ENCODE measurements at regions of chr22 and their contacts with region 1.

Region 1: GRCh38 chr22:24580276-24580675 is 12.6 kb downstream of the LRRC75B start:
- DNase-seq: no peak
- ATAC-seq: no peak
- H3K4me3 ChIP-seq: no peak overlapping the region
- H3K27ac ChIP-seq: no peak overlapping the region
- H3K4me1 ChIP-seq: no peaks in the 10 kb centered on the region
- H3K27me3 ChIP-seq: no peaks in the 10 kb centered on the region
- CTCF ChIP-seq: no peak
- EP300 ChIP-seq: no peak
- POLR2A ChIP-seq: no peak
- RAD21 ChIP-seq: no peak

Region 2: DNA sequence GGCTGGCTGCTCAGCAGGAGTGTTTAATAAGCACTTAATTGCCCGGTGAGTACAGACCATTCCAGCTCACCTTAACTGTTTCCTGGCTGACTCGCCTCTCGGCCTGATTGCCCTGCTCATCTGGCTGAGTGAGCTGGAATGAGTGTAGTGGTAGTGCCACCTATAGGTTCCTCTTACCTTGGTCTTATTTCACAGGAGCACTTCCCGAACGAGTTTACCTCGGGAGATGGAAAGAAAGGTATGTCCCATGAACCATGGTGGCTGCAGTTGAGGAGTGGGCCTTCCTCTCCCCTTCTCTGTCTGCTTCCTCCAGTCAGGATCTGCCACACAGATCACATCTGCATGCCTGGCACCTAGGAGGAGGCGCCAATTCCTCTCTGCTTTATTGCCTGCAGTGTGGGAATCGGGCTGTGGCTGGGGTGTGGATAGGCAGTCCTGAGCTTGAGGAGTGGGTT is 58.5 kb before region 1 on chr22:
- CTCF ChIA-PET with region 1: no interaction called
- POLR2A ChIA-PET with region 1: no interaction called
- RAD21 ChIA-PET with region 1: no interaction called
- SMC1A ChIA-PET with region 1: no interaction called
- in situ Hi-C with region 1: no loop called
- intact Hi-C with region 1: no loop called
- DNase-seq: no peak
- ATAC-seq: peak; percentile 88
- H3K4me3 ChIP-seq: no peak overlapping the region
- H3K27ac ChIP-seq: no peak overlapping the region
- H3K4me1 ChIP-seq: peaks cover 10% of the 10 kb centered on the region
- H3K27me3 ChIP-seq: no peaks in the 10 kb centered on the region
- CTCF ChIP-seq: peak; percentile 58 to 87 (median 61); a peak in 5 of 6 replicates
- EP300 ChIP-seq: no peak
- POLR2A ChIP-seq: no peak
- RAD21 ChIP-seq: peak; percentile 82

Region 3: GRCh38 chr22:24564376-24565058 is 15.8 kb before region 1 on chr22:
- CTCF ChIA-PET with region 1: interaction called, 4 read pairs
- POLR2A ChIA-PET with region 1: interaction called, 10 read pairs
- RAD21 ChIA-PET with region 1: no interaction called
- SMC1A ChIA-PET with region 1: interaction called, 11 read pairs
- in situ Hi-C with region 1: no loop called
- intact Hi-C with region 1: no loop called
- DNase-seq: no peak
- ATAC-seq: no peak
- H3K4me3 ChIP-seq: no peak overlapping the region
- H3K27ac ChIP-seq: no peak overlapping the region
- H3K4me1 ChIP-seq: no peaks in the 10 kb centered on the region
- H3K27me3 ChIP-seq: no peaks in the 10 kb centered on the region
- CTCF ChIP-seq: no peak
- EP300 ChIP-seq: no peak
- POLR2A ChIP-seq: no peak
- RAD21 ChIP-seq: no peak